Mammary epithelial cell (primary cell): ENCODE measurements at regions of chr4 and their contacts with region 1.

Region 1: DNA sequence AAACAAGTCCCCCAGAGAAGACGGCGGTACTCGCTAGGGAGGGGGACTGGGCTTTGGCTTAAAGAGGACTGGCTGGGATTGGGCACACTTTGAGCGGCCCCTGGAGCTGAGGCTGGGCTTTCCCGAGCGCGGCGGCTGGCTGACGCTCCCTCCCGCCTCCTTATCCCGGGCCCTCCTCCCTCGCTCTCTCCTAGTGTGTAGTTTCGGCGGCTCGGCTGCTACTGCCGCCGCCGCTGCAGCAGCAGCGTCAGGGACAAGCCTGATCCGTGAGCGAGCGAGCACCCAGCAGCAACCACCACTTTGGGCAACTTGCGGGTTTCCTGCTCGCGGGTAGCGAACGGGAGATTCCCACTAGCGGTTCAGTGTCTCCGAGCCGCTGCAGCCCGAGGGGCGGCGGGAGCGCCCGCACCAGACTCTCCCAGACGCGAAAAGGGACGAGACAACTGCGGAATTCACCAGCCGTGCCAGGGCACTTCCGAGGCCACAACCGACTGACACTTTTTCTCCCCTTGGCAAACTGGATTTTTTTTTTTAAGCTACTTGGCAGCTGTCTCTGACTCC is 629 bp upstream of the PCDH7 start:
- DNase-seq: peak; percentile 78
- H3K4me3 ChIP-seq: peak overlapping the region; percentile 79 to 89 (median 81)
- H3K27ac ChIP-seq: peak overlapping the region; percentile 35
- H3K4me1 ChIP-seq: peaks cover 36% of the 10 kb centered on the region
- H3K27me3 ChIP-seq: no peaks in the 10 kb centered on the region
- CTCF ChIP-seq: no peak

Region 2: GRCh38 chr4:30757357-30757756 is 37.8 kb after region 1 on chr4:
- CTCF ChIA-PET with region 1: no interaction called
- dilution Hi-C with region 1: no loop called
- in situ Hi-C with region 1: loop called in 1 of 2 experiments (anchors 5 kb)
- intact Hi-C with region 1: loop called (anchors 2 kb)
- DNase-seq: peak; percentile 95
- H3K4me3 ChIP-seq: no peak overlapping the region
- H3K27ac ChIP-seq: peak overlapping the region; percentile 94
- H3K4me1 ChIP-seq: peaks cover 55% of the 10 kb centered on the region
- H3K27me3 ChIP-seq: no peaks in the 10 kb centered on the region
- CTCF ChIP-seq: no peak

Region 3: GRCh38 chr4:30802622-30803323 is 83.2 kb after region 1 on chr4:
- CTCF ChIA-PET with region 1: no interaction called
- dilution Hi-C with region 1: no loop called
- in situ Hi-C with region 1: no loop called
- intact Hi-C with region 1: loop called (anchors 5 kb)
- DNase-seq: peak; percentile 29
- H3K4me3 ChIP-seq: no peak overlapping the region
- H3K27ac ChIP-seq: no peak overlapping the region
- H3K4me1 ChIP-seq: peaks cover 12% of the 10 kb centered on the region
- H3K27me3 ChIP-seq: no peaks in the 10 kb centered on the region
- CTCF ChIP-seq: no peak

Region 4: DNA sequence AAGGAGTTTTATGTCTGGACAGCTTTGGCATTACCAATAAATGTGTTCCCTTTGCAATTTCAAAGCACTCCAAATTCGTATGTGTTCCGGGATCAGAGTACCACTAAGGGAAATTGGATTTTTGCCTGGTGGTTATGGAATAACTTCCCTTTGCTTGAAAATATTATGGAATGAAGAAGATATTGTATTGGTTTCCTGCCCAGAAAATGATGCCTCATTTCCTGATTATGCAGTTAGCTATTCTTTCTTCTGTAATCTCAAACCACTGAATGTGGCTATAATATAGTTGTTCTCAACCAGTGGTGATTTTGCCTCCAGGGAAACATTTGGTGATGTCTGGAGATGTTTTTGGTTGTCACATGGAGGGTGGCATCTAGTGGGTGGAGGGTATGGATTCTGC is 143.5 kb after region 1 on chr4:
- CTCF ChIA-PET with region 1: no interaction called
- dilution Hi-C with region 1: no loop called
- in situ Hi-C with region 1: loop called in 1 of 2 experiments (anchors 10 kb)
- intact Hi-C with region 1: loop called (anchors 2 kb)
- DNase-seq: peak; percentile 16
- H3K4me3 ChIP-seq: no peak overlapping the region
- H3K27ac ChIP-seq: no peak overlapping the region
- H3K4me1 ChIP-seq: peaks cover 29% of the 10 kb centered on the region
- H3K27me3 ChIP-seq: no peaks in the 10 kb centered on the region
- CTCF ChIP-seq: no peak

Region 5: DNA sequence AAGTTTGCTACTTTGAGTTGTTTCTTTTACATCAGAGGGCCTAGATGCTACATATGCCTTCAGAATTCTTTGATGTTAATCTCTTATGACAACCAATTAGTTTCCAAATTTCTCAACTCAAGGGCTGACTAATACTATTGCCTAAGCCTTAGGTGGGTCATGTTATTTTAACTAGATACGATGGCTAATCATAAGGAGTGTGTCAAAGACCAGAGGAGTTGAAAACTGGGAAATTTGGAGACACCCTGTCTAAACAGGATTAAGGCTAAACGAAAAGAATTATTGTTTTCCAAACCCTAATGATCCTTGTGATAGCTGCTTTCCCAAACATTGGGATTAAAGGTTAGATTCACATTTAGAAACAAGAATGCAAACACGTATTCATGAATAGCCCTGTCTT is 229.1 kb after region 1 on chr4:
- CTCF ChIA-PET with region 1: no interaction called
- dilution Hi-C with region 1: no loop called
- in situ Hi-C with region 1: no loop called
- intact Hi-C with region 1: loop called (anchors 1 kb)
- DNase-seq: peak; percentile 91
- H3K4me3 ChIP-seq: no peak overlapping the region
- H3K27ac ChIP-seq: peak overlapping the region; percentile 74
- H3K4me1 ChIP-seq: peaks cover 39% of the 10 kb centered on the region
- H3K27me3 ChIP-seq: no peaks in the 10 kb centered on the region
- CTCF ChIP-seq: no peak